Motor neuron (in vitro differentiated cells): ENCODE measurements at regions of chr7 and their contacts with region 1.

Region 1: DNA sequence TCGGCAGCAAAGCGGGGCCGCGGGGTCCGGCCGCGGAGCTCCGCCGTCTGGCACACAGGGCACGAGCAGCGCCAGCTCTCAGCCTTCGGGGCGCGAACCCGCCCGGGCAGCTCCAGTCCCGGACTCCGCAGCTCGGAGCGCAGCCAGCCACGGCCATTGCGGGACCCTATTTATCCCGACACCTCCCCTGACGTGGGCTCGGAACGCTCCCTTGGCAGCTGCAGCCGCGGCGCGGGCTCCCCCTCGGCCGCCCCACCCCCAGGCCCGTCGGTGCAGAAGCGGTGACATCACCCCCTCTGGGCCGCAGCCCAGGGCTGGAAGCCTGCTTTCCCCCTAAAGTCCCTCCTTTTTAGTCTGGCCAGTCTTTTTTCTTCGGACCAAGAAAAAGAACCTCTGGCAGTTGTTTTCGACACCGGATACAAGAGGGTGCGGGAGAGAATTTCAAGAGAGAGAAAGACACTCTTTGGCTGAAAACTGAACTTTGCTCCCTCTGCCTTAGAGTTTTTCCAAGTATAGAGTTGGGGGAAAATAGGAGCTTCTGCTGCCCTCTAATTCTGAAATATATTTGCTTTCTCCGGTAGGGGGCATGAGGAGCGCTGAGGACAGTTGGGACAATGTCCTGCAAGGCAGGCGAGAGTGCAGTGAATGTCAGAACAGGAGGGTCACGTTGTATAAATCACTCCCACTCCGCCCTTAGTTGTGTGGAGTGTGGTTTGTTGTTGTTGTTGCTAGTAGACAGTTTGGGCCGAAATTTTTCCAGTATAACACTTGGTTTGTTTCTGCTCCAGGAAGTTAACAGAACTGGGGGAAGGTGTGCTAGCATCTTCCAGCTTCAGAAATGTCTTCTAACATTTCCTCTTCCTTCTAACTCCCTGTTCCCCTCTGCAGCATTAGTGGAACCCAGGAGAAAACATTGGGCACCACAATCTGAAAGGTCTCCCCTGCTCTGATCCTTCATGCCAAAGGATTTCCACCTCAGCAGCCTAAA is at the start of gene SFRP4:
- ATAC-seq: peak; percentile 68 to 83 (median 78)
- H3K4me3 ChIP-seq: peak within 1 kb of the TSS; percentile 29 to 46 (median 39)
- H3K27ac ChIP-seq: no peak within 1 kb of the TSS
- H3K4me1 ChIP-seq: peaks cover 0 to 15% of the 10 kb centered on the region in 2 donors
- total RNA-seq, gene SFRP4: 0.08 to 95.4 (median 0.81) TPM in 7 of 8 experiments, not detected in the other

Region 2: DNA sequence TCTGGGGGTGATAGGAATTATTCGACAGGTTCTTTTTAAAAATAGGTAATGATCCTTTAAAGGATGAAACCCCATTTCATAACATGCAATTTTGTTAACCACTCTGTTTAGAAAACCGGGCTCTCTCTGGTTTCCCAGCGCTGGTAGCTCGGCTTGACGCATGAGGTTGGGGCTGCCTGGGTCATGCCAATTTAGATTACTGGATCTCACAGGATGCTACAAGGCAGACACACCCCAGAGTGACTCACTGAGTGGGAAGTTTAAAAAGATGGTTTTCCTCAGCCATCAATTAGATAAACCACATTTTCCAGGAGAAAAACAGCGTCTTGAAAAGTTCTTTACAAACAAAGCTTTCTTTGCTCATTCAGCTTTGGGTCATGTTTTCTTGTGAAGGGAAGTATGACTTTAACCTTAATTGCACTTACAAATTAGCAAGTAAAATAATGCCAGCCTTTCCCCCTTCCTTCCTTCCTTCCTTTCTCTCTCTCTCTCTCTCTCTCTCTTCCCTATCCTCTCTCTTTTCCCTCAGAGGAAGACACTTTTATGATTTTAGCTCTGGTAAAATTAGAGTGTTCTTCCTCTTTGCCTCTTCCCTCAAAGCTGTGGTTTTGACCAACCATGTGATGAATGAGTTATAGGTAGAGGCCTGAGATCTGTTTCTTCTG is 103.3 kb after region 1 on chr7:
- in situ Hi-C with region 1: no loop called
- ATAC-seq: peak in 2 of 8 experiments; percentile 56 to 66
- H3K4me3 ChIP-seq: no peak overlapping the region
- H3K27ac ChIP-seq: no peak overlapping the region
- H3K4me1 ChIP-seq: no peaks in the 10 kb centered on the region

Region 3: DNA sequence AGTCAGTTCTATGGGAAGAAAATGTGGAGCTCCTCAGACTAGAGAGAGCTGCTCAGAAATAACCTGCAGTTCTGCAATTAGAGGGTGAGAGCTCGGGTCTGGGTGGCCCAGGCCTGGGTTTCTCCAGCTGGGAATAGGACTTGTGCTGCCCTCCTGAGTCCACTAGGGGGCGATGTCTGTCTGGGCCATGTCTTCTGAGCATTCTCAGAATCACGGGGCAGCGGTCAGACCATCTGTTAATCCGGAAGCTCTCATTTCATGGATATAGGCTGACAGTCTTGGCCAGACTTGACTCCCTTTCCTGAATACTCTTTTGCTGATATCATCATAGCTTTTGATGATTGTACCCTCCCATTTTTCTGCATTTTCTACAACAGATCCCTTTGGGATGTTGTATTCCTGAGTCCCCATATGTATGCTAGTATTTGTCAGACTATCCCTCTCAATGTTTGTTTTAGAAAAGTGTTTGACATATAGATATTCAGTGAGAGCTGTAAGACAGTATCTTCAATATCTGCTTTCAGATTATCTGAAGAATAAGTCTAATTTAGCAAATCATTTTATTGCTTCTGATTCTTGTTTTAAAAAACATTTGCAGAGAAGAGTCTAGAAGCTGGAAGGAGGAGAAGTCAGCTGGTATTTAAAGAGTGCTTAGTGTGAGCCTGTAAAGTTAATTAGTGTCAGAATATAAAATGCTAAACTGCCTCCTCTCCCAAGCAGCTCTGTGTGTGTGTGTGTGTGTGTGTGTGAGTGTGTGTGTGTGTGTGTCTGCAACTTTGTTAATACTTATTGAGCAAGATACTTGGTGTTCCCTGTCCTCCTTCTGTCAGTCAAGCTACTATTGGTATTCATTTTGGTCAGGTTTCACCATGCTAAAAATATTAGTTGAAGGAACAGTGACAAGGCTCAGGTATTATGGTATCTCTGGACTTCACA is 299.0 kb after region 1 on chr7:
- in situ Hi-C with region 1: loop called in 1 of 9 experiments (anchors 25 kb)
- ATAC-seq: peak; percentile 91 to 98 (median 94)
- H3K4me3 ChIP-seq: no peak overlapping the region
- H3K27ac ChIP-seq: no peak overlapping the region
- H3K4me1 ChIP-seq: peaks cover 0 to 3% of the 10 kb centered on the region in 2 donors

Region 4: DNA sequence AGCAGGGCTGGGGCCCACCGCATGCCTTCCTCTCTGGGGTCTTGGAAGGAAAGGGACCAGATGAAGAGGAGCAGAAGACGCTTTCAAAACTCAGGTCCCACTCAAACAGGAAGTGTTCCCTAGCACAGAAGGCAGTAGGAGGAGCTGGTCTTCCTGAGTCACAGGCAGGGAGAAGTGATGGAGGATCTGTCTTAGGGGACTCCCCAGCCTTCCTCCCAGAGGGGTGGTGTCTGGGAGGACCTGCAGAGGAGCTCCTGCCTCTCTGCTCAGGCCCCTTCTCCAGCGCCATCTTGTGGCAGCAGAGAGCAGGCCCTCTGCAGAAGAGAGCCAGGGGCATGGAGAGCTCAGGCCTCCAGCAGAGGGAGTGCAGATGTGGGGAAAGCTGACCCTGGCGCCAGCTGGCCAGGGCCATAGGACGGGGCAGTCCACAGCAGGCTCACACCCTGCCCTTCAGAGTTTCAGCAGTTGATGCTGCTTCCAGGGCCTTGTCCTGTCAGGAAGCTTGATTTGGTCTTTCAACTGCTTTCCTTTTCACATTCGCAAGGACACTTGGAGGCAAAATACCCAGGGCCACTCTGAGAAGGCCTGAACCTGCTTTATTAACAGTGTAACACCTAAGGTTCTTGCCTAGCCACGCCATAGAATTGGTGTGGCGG is 418.7 kb after region 1 on chr7:
- in situ Hi-C with region 1: loop called in 1 of 9 experiments (anchors 25 kb)
- ATAC-seq: peak; percentile 93 to 98 (median 96)
- H3K4me3 ChIP-seq: no peak overlapping the region
- H3K27ac ChIP-seq: no peak overlapping the region
- H3K4me1 ChIP-seq: peaks cover 0 to 3% of the 10 kb centered on the region in 2 donors

Region 5: DNA sequence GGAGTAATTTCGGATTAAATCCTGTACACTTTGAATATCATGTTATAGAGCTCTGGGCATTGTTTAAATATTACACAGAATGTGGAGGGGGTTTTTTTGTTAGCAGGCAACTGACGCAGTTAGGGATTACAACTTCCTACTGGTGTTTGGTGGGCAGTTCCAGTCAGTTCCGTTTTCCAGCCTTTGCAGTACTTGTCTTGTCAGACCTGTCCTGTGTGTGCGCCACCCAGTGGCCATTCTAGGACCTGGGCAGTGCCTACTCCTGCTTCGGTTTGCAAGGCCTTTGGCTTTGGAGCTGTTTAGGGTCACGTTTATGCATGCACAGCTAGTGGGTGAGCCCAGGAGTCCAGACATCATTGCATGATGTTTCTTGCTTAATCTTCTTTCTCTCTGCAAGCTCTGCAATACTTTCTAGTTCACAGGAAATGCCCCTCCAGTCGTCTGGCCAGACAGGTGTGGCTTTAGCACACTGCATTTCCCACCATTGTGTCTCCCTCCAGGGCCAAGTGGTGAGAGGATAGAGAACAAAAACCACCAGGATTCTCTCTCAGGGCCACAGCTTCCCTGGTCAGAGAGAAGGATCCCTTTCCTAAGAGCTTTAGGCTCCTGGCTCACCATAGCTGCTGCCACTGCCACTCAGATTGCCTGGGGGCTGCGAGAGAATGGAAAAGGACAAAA is 453.0 kb after region 1 on chr7:
- in situ Hi-C with region 1: loop called in 1 of 9 experiments (anchors 25 kb)
- ATAC-seq: peak; percentile 81 to 93 (median 92)
- H3K4me3 ChIP-seq: no peak overlapping the region
- H3K27ac ChIP-seq: no peak overlapping the region
- H3K4me1 ChIP-seq: peaks cover 5 to 11% of the 10 kb centered on the region in 2 donors